Colonic mucosa (tissue), 4 donors: ENCODE measurements at regions of chr12 and their contacts with region 1.

Region 1: GRCh38 chr12:77925536-77926108 is 94.9 kb downstream of the NAV3 start:
- DNase-seq: peak; percentile 49
- H3K4me3 ChIP-seq: no peak overlapping the region
- H3K27ac ChIP-seq: no peak overlapping the region
- H3K4me1 ChIP-seq: no peaks in the 10 kb centered on the region
- H3K27me3 ChIP-seq: no peaks in the 10 kb centered on the region
- CTCF ChIP-seq: peak; percentile 84

Region 2: GRCh38 chr12:77723308-77723707 is 202.3 kb before region 1 on chr12:
- intact Hi-C with region 1: loop called (anchors 2 kb)
- DNase-seq: no peak
- H3K4me3 ChIP-seq: no peak overlapping the region
- H3K27ac ChIP-seq: no peak overlapping the region
- H3K4me1 ChIP-seq: no peaks in the 10 kb centered on the region
- H3K27me3 ChIP-seq: no peaks in the 10 kb centered on the region
- CTCF ChIP-seq: no peak